Vagina (tissue), 2 donors: ENCODE measurements at regions of chr4 and their contacts with region 1.

Region 1: DNA sequence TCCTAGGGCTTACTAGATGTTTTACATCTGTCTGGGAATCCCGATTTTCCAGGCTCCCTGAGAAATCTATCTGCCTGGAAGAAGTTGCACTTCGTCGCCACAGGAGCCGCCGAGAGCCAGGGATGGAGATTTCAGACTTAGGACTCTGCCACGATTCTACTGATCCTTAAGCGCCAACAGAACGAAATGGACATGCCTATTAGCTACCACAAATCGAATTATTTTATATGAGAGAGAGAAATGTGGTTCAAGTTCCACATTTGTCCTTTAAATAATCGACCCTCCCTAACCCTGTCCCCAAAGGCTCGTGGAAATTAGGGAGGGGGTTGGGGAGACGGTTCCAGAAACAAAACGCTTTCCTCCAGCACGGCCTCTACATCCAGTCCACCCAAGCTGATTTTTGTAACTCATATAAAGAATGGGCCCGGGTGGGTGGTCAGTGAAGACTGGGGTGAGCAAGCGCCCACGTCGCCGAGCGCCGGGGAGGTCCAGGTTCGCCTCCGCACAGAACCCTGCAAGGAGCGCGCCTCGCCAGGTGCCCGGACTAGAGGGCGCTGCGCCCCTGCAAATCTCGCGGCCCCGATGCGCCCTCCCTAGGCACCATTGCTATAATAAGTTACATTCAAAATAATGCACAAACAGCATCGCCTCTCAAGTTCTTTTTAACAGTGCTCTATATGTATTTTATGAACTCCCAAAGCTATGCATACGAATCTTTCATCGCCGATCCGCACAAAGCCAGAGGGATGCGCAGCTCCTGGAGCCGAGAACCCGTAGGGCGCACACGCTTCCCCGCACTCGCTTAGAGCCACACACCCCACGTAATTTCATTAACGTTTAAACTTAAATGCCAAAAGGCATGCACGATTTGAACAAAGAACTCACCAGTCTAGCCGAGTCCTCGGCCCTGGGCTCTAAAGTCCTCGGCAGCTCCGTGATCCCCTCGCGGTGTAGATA is 2.1 kb upstream of the FAT1 start:
- DNase-seq: no peak
- H3K4me3 ChIP-seq: peak overlapping the region; percentile 66 to 74
- H3K27ac ChIP-seq: peak overlapping the region; percentile 86
- H3K4me1 ChIP-seq: peaks cover 22% of the 10 kb centered on the region
- H3K27me3 ChIP-seq: no peaks in the 10 kb centered on the region
- CTCF ChIP-seq: peak in 2 of 3 experiments; percentile 21 to 83
- POLR2A ChIP-seq: no peak

Region 2: DNA sequence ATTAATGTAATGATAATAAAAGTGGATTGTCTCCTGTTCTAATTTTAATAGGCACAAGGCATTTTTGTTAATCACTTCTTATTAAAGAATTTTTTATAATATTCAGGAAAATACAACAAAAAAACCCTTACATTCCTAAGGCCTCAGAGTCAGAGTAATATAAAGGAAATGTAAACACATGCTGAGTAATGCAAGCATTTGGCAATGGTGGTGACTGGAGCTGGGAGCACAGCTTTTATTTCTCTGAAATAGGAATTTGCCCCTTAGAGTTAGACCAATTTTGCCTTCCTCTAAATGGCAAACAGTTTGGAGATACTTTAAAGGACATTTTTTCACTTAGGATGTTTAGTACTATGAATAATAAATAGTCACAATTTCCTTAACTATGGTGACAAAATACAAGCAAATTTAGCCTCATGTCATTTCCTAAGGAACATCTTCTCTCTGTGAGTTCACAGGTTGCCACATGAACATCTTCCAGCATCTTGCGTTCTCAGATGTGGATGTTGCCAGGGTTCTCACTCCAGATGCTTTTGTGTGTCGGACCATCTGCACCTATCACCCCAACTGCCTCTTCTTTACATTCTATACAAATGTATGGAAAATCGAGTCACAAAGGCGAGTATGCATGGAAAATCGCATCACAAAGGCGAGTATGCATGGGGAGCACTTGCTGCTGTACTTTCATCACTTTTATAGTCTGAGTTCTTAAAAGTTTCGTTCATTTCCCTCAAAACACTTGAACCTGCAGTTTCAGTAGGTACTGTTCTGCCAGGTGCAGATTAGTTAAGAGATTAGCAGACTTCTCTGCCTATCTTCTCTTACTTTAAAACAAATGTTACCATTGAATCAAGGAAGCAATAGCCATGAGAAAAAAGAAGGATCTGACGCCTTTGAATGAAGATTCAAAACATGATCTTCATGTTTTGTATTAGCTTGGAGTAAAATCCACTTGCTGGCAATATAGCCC is 475.7 kb before region 1 on chr4:
- intact Hi-C with region 1: no loop called
- DNase-seq: no peak
- H3K4me3 ChIP-seq: no peak overlapping the region
- H3K27ac ChIP-seq: no peak overlapping the region
- H3K4me1 ChIP-seq: no peaks in the 10 kb centered on the region
- H3K27me3 ChIP-seq: no peaks in the 10 kb centered on the region
- CTCF ChIP-seq: no peak
- POLR2A ChIP-seq: no peak

Region 3: DNA sequence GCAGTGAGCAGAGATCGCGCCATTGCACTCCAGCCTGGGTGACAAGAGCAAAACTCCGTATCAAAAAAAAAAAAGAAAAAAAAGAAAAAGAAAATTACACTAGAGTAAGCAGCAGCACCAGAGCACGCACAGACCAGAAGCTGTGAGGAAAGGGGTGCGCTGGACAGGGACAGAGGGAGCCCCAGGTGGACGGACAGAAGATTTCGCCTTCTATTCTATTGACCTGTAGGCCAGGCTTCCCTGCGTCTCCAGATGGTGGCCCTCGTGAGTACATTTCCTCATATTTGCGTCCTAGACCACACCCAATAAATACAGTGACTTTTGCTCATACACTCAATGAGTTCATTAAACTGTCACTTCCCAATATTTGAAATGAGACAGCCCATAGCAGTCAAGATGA is 189.5 kb before region 1 on chr4:
- intact Hi-C with region 1: no loop called
- DNase-seq: no peak
- H3K4me3 ChIP-seq: no peak overlapping the region
- H3K27ac ChIP-seq: no peak overlapping the region
- H3K4me1 ChIP-seq: no peaks in the 10 kb centered on the region
- H3K27me3 ChIP-seq: no peaks in the 10 kb centered on the region
- CTCF ChIP-seq: no peak
- POLR2A ChIP-seq: no peak

Region 4: DNA sequence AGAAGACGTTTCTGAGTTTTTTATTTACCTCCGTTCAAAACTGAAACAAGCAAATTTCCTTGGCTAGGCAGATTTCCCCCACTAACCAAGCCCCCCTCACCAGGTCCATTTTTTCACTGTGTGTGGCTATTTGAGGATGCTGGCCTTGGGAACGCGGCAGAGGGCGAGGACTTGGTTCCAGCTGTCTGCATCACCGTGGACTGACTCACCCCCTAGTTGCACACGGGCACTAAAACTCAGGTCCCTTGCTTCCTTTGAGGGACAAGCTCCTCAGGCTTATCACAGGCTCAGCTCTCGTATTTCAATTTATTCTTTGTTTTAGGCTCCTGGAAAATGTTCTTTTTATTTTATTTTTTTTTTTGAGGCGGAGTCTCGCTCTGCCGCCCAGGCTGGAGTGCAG is 162.0 kb before region 1 on chr4:
- intact Hi-C with region 1: no loop called
- DNase-seq: no peak
- H3K4me3 ChIP-seq: no peak overlapping the region
- H3K27ac ChIP-seq: no peak overlapping the region
- H3K4me1 ChIP-seq: no peaks in the 10 kb centered on the region
- H3K27me3 ChIP-seq: no peaks in the 10 kb centered on the region
- CTCF ChIP-seq: no peak
- POLR2A ChIP-seq: no peak

Region 5: DNA sequence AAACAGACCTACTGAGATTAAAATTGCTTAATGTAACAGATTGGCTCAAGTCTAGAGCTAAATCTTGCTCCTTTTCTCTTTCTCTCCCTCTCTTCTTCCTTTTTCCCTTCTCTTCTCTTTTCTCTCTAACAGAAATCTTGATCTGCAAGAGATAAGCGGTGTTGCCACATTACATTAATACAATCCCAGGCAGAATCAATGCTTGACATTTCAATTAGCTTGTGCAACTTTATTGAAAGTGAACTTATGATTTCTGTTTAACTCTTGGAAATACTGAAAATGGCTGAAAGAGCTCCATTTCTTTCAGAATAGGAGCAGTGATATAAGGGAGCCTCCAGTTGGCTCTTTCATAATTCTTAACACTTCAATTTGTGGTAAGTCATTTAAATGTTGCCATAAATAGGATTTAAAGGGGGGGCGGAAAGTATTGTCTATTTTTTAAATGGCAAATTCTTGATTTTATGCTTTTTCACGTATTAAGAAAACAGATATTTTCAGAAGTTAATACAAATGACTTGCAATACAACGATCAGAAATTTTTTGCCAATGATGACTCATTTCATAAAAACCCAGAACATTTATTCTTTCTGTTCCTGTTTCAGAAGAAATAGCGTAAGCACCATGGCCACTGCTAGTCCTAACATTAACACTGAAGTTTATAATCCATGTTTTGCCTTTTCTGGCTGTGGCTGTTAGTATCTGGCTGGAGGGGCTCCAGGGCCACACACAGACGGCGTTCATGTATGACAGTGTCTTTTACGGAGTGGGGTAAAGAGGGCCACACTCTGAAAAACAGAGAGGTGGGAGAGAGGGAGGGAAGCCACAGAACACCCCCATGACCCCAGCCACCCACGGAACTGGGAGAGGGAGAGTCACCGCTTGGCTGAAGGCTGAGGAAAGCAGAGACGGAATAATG is 113.6 kb after region 1 on chr4:
- intact Hi-C with region 1: loop called (anchors 10 kb)
- DNase-seq: no peak
- H3K4me3 ChIP-seq: peak overlapping the region; percentile 32 to 39
- H3K27ac ChIP-seq: peak overlapping the region; percentile 77
- H3K4me1 ChIP-seq: no peaks in the 10 kb centered on the region
- H3K27me3 ChIP-seq: no peaks in the 10 kb centered on the region
- CTCF ChIP-seq: no peak
- POLR2A ChIP-seq: no peak